Activated CD8-positive, alpha-beta T cell treated with anti-CD3 and anti-CD28 coated beads for 36 hours (primary cell): ENCODE measurements at regions of chr5 and their contacts with region 1.

Region 1: DNA sequence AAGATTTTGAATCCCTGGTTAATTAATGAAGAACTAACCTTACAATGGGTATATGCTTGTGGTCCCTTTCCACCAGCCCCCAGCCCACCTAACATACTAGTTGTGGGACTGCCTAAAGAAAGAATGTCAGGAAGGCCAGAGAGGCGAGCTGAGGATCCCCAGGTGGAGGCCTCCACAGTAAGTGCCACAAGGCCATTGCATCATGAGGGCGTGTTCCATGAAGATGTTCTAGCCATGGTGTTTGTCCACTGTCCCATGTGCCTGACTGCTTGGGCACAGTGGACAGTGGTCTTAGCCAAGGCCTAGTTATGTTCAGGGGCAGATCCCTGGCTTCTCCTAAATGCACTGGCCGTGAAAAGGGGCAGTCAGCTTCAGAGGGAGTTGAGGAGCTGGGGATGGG is 21.2 kb downstream of the ZFP62 start:
- DNase-seq: no peak
- ATAC-seq: no peak
- H3K4me3 Mint-ChIP-seq: no peak overlapping the region
- H3K27ac Mint-ChIP-seq: no peak overlapping the region
- H3K4me1 Mint-ChIP-seq: peaks cover 5% of the 10 kb centered on the region
- H3K27me3 Mint-ChIP-seq: no peaks in the 10 kb centered on the region
- CTCF ChIP-seq: no peak

Region 2: GRCh38 chr5:180802325-180803180 is 37.4 kb before region 1 on chr5 and contains the start of gene MGAT1:
- CTCF ChIA-PET with region 1: interaction called, 3 read pairs
- POLR2A ChIA-PET with region 1: interaction called, 87 read pairs
- intact Hi-C with region 1: loop called (anchors 5 kb)
- DNase-seq: peak; percentile 85
- ATAC-seq: peak; percentile 56
- H3K4me3 Mint-ChIP-seq: peak within 1 kb of the TSS; percentile 88
- H3K27ac Mint-ChIP-seq: peak within 1 kb of the TSS; percentile 99
- H3K4me1 Mint-ChIP-seq: peaks cover 70% of the 10 kb centered on the region
- H3K27me3 Mint-ChIP-seq: no peaks in the 10 kb centered on the region
- CTCF ChIP-seq: no peak
- total RNA-seq, gene MGAT1: 161 to 171 TPM